B cell (primary cell): ENCODE measurements at regions of chr9 and their contacts with region 1.

Region 1: DNA sequence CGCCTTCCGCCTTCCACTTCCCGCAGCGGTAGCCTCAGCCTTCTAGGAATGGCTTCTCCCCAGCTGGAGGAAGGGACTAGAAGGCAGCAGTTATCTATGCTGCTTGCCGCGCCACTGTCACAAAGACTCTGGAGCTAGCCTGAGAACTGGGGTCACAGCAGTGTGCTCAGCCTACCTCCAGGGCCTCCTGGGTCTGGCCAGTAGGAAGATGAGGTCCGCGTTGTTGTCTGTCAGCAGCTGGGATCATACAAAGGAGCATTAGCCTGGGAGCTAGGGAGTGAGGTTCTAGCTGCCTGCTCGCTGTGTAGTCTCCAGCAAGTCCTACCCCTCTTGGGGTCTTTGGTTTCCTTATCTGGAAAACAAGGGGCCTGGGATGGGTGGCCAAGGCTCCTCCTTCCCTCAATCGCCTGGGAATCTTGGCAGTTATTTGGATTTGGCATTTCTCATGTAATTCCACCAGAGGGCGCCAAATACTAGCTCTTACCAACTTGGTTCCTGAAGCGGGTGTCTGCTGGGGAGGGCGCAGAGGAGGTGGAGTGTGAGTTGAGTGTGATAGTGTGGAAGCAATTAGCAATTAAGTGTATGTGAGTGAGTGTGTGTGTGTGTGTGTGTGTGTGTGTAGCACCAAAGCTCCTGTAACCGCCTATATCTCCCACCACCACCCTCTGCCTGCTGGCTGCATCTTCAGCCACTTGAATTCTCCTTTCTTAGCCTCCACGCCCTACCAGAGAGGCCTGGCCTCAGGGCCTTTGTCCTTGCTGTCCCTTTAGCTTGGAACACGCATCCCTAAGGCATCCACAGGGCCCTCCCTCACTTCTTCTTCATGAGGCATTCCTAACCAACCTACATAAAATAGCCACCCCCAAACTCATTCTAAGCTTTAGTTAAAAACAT is 97.1 kb downstream of the ENTREP1 start:
- DNase-seq: peak; percentile 56
- ATAC-seq: peak; percentile 28
- H3K4me3 ChIP-seq: no peak overlapping the region
- H3K4me3 Mint-ChIP-seq: no peak overlapping the region
- H3K27ac ChIP-seq: no peak overlapping the region
- H3K27ac Mint-ChIP-seq: no peak overlapping the region
- H3K4me1 ChIP-seq: no peaks in the 10 kb centered on the region
- H3K4me1 Mint-ChIP-seq: peaks cover 1% of the 10 kb centered on the region
- H3K27me3 ChIP-seq: peaks cover 0 to 12% (median 0%) of the 10 kb centered on the region in 4 experiments
- H3K27me3 Mint-ChIP-seq: peaks cover 19% of the 10 kb centered on the region
- CTCF ChIP-seq: peak; percentile 78

Region 2: DNA sequence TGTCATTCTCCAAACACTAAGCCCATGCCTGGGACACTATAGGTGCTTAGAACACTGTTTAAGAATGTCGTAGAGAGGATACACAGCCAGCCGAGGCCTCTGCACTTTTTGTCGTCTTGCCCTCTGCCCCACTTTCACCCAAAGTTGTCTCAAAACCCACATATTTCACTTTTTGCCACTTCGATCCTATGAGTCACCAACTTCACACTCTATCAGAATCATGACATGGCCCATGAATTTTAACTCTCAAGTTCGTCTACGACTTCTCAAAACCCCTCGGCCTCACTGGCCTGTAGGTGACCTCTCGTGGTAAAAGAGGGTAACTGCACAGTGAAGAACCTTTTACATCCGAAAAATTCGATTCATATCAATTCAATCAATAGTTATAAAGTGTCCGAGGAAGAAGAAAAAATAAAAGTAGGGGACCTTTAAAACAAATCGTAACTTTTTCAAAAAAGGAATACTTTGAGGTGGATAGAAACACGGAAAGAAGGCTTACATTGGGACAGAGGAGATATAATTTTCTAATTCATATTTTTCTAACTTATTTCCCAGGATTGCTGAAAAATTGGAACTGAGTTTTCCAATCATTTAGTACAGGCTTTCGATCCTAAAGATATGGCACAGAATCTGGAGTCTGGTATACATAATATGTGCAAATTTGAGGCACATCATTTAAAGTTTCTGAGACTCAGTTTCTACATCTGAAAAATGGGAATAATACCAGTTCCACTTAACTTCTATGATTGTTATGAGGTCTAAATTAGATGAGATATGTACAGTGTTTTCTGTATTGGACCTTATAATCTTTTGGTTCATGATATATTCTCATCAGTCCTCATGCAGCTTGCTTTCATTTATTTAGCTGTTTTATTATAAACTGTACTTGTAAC is 127.4 kb after region 1 on chr9:
- CTCF ChIA-PET with region 1: interaction called, 6 read pairs
- POLR2A ChIA-PET with region 1: no interaction called
- intact Hi-C with region 1: loop called (anchors 5 kb)
- DNase-seq: peak; percentile 40
- ATAC-seq: peak; percentile 47
- H3K4me3 ChIP-seq: no peak overlapping the region
- H3K4me3 Mint-ChIP-seq: no peak overlapping the region
- H3K27ac ChIP-seq: no peak overlapping the region
- H3K27ac Mint-ChIP-seq: no peak overlapping the region
- H3K4me1 ChIP-seq: peaks cover 0 to 5% of the 10 kb centered on the region in 2 donors
- H3K4me1 Mint-ChIP-seq: peaks cover 2% of the 10 kb centered on the region
- H3K27me3 ChIP-seq: peaks cover 0 to 4% (median 0%) of the 10 kb centered on the region in 4 experiments
- H3K27me3 Mint-ChIP-seq: peaks cover 27% of the 10 kb centered on the region
- CTCF ChIP-seq: peak; percentile 85

Region 3: DNA sequence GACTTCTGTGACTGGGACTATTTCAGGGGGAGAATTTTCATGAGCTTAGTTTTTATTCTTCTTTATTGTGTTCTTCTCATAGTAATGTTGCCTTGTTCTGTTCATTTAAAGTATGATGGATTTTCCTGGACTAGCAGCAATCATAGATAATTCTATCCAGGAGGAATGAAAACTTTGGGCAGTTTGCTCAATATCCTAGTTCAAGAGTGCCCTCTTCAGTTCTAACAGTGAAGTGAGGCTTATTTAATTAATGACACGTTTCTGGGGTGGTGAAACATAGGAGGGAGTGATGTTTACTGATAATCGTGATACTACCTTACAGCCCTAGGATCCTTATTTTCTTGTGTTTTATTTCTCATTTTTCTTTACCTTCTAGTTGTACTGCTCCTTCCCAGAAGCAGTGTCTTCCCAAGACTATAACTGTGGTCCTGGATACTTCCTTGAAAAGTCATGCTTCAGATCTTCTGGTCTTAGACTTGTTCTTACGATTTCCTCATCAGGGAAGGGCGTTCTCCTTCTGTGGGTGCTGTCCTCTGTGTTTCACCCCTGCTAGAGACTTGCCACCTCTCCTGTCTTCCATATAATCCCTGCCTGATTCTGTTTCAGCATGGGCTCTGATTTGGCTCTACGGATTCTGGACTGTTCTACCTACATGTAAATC is 455.8 kb after region 1 on chr9:
- CTCF ChIA-PET with region 1: interaction called, 11 read pairs
- POLR2A ChIA-PET with region 1: no interaction called
- intact Hi-C with region 1: no loop called
- DNase-seq: peak; percentile 14
- ATAC-seq: no peak
- H3K4me3 ChIP-seq: no peak overlapping the region
- H3K4me3 Mint-ChIP-seq: no peak overlapping the region
- H3K27ac ChIP-seq: no peak overlapping the region
- H3K27ac Mint-ChIP-seq: no peak overlapping the region
- H3K4me1 ChIP-seq: no peaks in the 10 kb centered on the region
- H3K4me1 Mint-ChIP-seq: no peaks in the 10 kb centered on the region
- H3K27me3 ChIP-seq: peaks cover 0 to 3% (median 0%) of the 10 kb centered on the region in 4 experiments
- H3K27me3 Mint-ChIP-seq: peaks cover 8% of the 10 kb centered on the region
- CTCF ChIP-seq: peak; percentile 54

Region 4: DNA sequence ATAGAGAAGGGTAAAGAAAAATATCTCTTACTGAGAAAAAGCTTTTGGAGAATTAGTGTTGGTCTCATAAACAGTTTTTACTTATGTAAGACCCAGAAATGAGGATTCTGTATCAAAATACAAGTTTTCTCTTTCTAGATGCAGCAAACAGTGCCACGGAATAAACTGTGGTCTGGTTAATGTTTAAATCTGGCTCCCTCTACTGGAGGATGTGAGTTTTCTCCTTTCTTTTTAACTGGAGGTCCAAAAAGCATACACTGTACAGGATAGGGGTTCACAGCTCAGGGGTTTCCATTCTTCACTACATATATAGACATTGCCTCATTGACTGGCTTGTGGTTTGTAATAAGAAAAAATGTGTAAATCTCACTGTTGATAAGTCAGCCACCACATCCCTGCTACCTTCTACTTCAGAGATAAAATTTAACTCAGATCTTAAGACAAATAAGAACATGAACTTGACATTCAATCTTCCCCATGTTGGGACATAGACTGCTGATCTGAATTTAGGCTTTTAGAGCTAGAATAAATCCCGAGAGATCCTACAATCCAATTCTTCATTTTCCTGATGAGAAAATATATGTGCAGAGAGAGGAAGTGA is 497.4 kb after region 1 on chr9:
- CTCF ChIA-PET with region 1: interaction called, 49 read pairs
- POLR2A ChIA-PET with region 1: no interaction called
- intact Hi-C with region 1: no loop called
- DNase-seq: peak; percentile 49
- ATAC-seq: no peak
- H3K4me3 ChIP-seq: no peak overlapping the region
- H3K4me3 Mint-ChIP-seq: no peak overlapping the region
- H3K27ac ChIP-seq: no peak overlapping the region
- H3K27ac Mint-ChIP-seq: no peak overlapping the region
- H3K4me1 ChIP-seq: no peaks in the 10 kb centered on the region
- H3K4me1 Mint-ChIP-seq: no peaks in the 10 kb centered on the region
- H3K27me3 ChIP-seq: no peaks in the 10 kb centered on the region
- H3K27me3 Mint-ChIP-seq: peaks cover 21% of the 10 kb centered on the region
- CTCF ChIP-seq: peak; percentile 81

Region 5: DNA sequence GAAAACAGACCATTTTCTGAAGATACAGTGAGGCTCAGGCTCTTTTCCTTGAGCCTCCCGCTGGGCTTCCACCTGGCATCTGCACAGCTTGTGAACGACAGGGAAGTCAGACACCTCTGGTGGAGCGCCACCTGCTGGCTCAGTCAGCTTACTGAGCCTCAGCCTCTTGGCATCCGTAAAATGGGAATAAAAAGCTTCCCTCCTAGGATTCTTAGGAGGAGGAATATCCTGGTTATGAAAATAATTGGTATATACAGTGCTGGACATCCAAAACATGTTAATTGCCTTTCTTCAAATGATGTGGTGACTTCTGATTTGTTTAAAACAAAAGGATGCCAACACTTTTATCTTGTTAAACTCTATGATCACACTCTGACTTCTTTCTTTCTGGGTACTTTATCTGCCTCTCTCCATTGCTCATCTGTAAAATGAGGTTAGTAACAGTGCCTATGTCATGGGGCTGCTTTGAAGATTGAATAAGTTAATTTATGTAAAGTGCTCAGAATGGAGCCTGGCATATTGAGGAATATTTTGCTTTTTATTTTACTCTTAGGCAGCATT is 689.0 kb after region 1 on chr9:
- CTCF ChIA-PET with region 1: interaction called, 49 read pairs
- POLR2A ChIA-PET with region 1: no interaction called
- intact Hi-C with region 1: no loop called
- DNase-seq: peak; percentile 55
- ATAC-seq: no peak
- H3K4me3 ChIP-seq: no peak overlapping the region
- H3K4me3 Mint-ChIP-seq: no peak overlapping the region
- H3K27ac ChIP-seq: no peak overlapping the region
- H3K27ac Mint-ChIP-seq: no peak overlapping the region
- H3K4me1 ChIP-seq: peaks cover 5 to 7% of the 10 kb centered on the region in 2 donors
- H3K4me1 Mint-ChIP-seq: peaks cover 9% of the 10 kb centered on the region
- H3K27me3 ChIP-seq: peaks cover 0 to 3% (median 1%) of the 10 kb centered on the region in 4 experiments
- H3K27me3 Mint-ChIP-seq: peaks cover 27% of the 10 kb centered on the region
- CTCF ChIP-seq: peak; percentile 95